Left cardiac atrium (tissue), 4 donors: ENCODE measurements at regions of chr1 and their contacts with region 1.

Region 1: DNA sequence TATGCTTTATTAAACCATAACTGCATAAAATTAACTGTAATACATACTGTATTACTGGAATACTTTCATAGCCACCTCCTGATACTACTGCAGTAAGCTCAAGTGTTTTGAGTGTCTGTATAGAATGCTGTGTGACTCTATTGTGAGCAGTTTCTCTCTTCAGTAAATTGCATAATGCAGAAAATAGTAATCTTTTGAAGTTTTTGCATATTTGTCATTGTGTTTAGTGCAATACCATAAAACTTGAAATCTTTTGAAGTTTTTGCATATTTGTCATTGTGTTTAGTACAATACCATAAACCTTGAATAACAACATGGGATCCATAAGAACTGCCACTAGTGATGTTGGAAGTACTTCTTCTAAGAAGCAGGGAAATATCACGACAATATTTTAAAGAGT is 11.2 kb downstream of the TPR start:
- DNase-seq: no peak
- ATAC-seq: no peak

Region 2: DNA sequence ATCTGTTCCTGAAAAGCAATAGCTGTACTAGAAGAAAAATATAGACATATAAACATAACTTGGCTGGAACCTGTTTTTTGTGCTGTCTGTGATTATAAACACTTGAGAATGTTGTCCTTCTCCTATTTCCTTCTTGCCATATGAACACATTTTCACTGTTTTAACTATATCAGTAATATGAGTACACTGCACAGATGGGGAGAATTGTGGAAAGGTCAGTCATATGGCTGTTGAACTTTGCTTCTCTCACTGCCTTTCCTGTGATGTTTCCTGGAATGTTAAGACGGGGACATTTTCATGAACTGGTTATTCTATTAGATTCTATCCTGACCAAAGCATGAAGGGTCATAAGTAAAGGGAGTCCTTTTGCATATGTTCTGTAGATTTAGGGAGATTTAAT is 604.8 kb before region 1 on chr1:
- intact Hi-C with region 1: no loop called
- DNase-seq: no peak
- ATAC-seq: no peak

Region 3: DNA sequence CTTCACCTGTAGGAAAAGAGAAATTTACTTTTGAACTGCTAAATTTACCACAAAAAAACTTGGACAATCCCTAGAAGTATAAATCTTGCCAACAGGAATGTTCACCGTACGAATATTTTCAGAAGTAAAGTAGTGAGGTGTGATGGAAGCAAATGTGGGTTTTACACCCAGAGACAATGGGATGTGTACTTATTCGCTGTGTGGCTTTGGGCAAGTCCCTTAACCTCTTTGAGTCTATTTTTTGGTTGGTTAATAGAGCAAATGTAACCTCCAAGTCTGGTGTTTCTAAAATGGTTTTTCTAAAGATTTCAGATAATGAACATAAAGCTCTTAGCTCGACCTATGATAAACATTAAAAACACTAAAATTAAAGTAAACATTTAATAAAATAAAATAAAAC is 40.0 kb before region 1 on chr1:
- intact Hi-C with region 1: loop called in 1 of 2 experiments (anchors 5 kb)
- DNase-seq: no peak
- ATAC-seq: no peak

Region 4: GRCh38 chr1:186875896-186876835 is 512.3 kb after region 1 on chr1:
- intact Hi-C with region 1: no loop called
- DNase-seq: no peak
- ATAC-seq: peak in 1 of 2 donors; percentile 38